ENCODE measurements at regions of chr2 and their contacts with region 1.

Region 1: GRCh38 chr2:63841254-63842022 is at the start of gene UGP2:
- H3K4me3 Mint-ChIP-seq: peak within 1 kb of the TSS; percentile 98
- H3K27ac Mint-ChIP-seq: peak within 1 kb of the TSS; percentile 100
- H3K4me1 Mint-ChIP-seq: peaks cover 40% of the 10 kb centered on the region
- H3K27me3 Mint-ChIP-seq: no peaks in the 10 kb centered on the region

Region 2: DNA sequence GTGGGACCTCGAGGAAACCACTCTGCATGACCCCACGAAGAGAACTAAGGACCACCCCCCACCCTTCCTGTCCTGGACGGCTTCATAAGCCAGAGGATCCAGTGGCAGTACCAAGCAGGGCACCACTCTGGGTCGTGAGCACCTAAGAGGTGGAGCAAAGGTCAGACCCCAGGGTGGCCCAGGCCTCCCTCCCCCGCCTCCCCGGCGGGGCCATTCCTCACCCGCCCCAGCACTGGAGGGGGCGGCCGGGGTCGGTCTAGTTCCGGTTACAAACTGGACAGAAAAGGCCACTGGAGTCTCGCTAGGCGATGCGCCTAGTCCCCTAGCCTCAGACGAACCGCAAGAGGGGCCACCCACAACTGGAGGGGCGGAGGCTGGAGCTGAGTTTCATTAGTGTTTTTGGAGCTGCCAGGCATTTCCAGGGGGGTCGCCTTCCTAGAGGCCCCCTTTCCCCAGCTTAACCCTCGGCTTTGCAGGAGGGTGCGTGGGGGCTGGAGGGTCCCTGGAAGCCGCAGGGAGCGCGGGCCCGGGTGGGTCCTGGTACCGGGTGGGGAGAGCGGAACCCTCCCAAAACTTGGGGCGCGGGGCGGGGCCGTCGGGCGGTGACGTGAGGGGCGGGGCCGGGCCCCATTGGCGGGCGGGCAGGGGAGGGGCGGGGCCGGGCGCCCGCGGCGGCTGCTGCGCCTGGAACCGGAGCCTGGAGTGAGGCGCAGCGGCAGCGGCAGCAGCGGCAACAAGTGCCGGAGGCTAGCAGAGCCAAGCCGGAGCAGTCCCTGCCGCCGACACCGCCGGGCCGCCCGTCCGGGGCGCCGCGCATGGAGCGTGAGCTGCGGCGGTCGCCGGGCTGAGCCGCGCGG is 1645.8 kb before region 1 on chr2 and contains the start of gene B3GNT2:
- intact Hi-C with region 1: loop called (anchors 10 kb)
- H3K4me3 Mint-ChIP-seq: peak within 1 kb of the TSS; percentile 95
- H3K27ac Mint-ChIP-seq: peak within 1 kb of the TSS; percentile 93
- H3K4me1 Mint-ChIP-seq: peaks cover 49% of the 10 kb centered on the region
- H3K27me3 Mint-ChIP-seq: no peaks in the 10 kb centered on the region

Region 3: GRCh38 chr2:63692002-63692606 is 149.3 kb before region 1 on chr2:
- intact Hi-C with region 1: loop called (anchors 5 kb)
- H3K4me3 Mint-ChIP-seq: no peak overlapping the region
- H3K27ac Mint-ChIP-seq: no peak overlapping the region
- H3K4me1 Mint-ChIP-seq: no peaks in the 10 kb centered on the region
- H3K27me3 Mint-ChIP-seq: no peaks in the 10 kb centered on the region

Region 4: DNA sequence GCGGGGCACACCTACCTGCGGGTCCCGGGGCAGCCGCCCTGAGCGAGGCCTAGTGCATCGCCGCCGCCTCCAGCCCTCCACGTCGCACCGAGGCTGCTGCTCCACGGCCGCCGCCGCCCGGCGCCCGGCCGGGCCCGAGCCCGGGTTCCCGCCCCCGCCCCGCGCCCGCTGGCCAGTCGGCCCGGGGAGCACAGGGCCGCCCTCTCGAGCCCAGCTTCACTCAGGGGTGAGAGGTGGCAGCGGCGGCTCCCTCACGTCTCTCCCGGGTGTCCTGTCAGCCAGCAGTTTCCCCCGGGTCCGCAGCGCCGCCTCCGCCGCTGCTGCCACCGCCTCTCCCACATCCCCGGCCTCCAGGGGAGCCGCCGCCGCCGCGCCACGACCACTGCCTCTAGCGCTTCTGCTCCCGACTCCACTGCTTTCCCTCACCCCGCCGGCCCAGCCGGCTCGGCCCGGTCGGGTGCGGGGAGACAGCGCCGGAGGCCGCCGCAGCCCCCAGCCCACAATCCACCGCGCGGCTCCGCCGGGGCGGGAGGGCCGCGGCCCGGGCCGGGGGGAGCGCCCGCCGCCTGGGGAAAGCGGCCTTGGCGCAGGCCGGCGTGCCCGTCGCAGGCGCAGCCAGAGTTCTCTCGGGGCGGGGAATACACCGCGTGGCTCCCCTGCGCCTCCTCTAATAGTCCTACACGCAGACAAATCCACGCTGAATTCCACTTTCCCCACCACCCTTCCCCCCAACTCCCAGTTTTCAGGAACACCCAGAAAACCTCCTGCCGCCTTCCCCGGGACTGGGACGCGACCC is 177.7 kb after region 1 on chr2 and contains the start of gene VPS54:
- intact Hi-C with region 1: loop called (anchors 5 kb)
- H3K4me3 Mint-ChIP-seq: peak within 1 kb of the TSS; percentile 93
- H3K27ac Mint-ChIP-seq: peak within 1 kb of the TSS; percentile 100
- H3K4me1 Mint-ChIP-seq: peaks cover 36% of the 10 kb centered on the region
- H3K27me3 Mint-ChIP-seq: no peaks in the 10 kb centered on the region

Region 5: GRCh38 chr2:64988420-64989125 is 1147.1 kb after region 1 on chr2:
- intact Hi-C with region 1: loop called (anchors 5 kb)
- H3K4me3 Mint-ChIP-seq: peak overlapping the region; percentile 80
- H3K27ac Mint-ChIP-seq: peak overlapping the region; percentile 75
- H3K4me1 Mint-ChIP-seq: peaks cover 64% of the 10 kb centered on the region
- H3K27me3 Mint-ChIP-seq: peaks cover 4% of the 10 kb centered on the region

Measured in dendritic cell treated with granulocyte-macrophage colony-stimulating factor and Interleukin-4, amounts not matched to agents 40 ng/mL and 50 ng/mL, for 4 days (primary cell).